Activated T-helper 1 cell treated with anti-CD3 and anti-CD28 coated beads, Interleukin-12 subunit alpha, Interleukin-12 subunit beta, Interleukin-2, Interleukin-4 antibody, amounts not matched to agents 30 ng/mL and 10 ng/mL and 1 ng/mL, durations not matched to agents 14 hours and 24 hours and 36 hours (primary cell): ENCODE measurements at regions of chr4 and their contacts with region 1.

Region 1: DNA sequence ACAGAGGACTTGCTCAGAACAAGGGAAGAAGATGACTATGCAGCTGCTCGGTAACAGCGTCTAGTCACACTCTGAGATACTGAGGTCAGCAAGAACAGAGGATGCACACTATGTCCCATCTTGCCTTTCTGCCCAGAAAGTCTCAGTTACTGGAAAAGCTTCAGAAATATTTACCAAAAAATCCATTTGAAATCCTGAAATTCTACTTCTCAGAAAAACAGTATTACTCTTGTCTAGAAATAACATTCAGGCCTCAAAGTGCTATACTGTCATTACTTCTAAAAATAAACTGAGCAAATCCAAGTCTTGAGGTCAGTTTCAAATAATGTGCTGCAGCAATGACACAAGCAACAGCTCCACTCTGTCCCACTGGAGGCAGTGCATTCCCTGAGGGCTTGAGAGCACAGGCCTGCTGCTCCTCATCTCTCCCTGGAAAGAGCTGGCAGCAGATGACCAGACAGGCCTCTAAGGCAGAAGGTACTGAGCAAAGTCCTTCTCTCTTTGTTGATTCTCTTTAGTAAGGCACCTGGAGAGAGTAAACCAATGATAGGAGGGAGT is 76.9 kb downstream of the CAMK2D start:
- DNase-seq: no peak
- H3K4me3 Mint-ChIP-seq: peak overlapping the region; percentile 58
- H3K27ac Mint-ChIP-seq: peak overlapping the region; percentile 90
- H3K4me1 Mint-ChIP-seq: peaks cover 70% of the 10 kb centered on the region
- H3K27me3 Mint-ChIP-seq: no peaks in the 10 kb centered on the region

Region 2: DNA sequence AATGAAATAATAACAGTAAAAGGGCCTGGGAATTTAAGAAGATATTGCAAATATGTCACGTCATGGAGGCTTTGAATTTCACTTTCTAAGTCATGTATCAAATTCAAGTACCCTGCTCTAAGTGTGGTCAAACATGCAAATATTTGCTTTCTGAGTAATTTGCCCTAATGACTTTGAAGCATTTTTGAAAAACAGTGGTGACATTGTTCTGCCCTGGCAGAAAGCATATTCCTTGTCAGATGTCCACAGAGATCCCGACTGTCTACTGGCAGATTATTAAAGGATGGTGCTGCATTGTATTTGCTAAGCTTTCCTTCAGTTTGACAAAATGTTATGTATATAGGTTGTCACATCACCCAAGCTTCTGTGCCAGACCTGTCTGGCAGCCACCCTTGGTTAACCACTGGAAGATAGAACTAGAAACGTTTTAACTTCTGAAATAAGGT is 542.7 kb before region 1 on chr4:
- intact Hi-C with region 1: loop called (anchors 10 kb)
- DNase-seq: no peak
- H3K4me3 Mint-ChIP-seq: no peak overlapping the region
- H3K27ac Mint-ChIP-seq: no peak overlapping the region
- H3K4me1 Mint-ChIP-seq: peaks cover 20% of the 10 kb centered on the region
- H3K27me3 Mint-ChIP-seq: peaks cover 9% of the 10 kb centered on the region

Region 3: DNA sequence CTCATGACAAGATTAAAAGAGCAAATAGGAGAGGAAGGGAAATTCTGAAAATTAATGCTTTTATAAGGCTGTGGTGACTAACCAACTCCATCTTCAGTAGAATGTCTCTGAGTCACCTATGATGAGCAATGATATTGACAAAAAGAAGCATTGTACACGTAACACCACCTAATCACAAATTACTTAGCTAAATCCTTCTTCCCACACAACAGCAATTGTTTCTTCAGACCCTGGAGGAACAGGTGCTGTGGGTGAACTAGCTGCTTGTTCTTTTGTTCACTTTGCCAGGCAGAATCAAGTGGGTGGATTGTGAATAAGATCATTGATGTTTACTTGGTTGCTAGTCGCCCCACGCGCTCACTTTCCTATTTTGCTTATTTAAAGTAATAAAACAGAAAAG is 238.6 kb before region 1 on chr4:
- intact Hi-C with region 1: loop called (anchors 2 kb)
- DNase-seq: no peak
- H3K4me3 Mint-ChIP-seq: no peak overlapping the region
- H3K27ac Mint-ChIP-seq: peak overlapping the region; percentile 54
- H3K4me1 Mint-ChIP-seq: peaks cover 24% of the 10 kb centered on the region
- H3K27me3 Mint-ChIP-seq: no peaks in the 10 kb centered on the region

Region 4: GRCh38 chr4:113547487-113548042 is 137.0 kb before region 1 on chr4:
- intact Hi-C with region 1: loop called (anchors 1 kb)
- DNase-seq: peak; percentile 87
- H3K4me3 Mint-ChIP-seq: no peak overlapping the region
- H3K27ac Mint-ChIP-seq: peak overlapping the region; percentile 49
- H3K4me1 Mint-ChIP-seq: peaks cover 30% of the 10 kb centered on the region
- H3K27me3 Mint-ChIP-seq: no peaks in the 10 kb centered on the region

Region 5: GRCh38 chr4:113574636-113575103 is 109.9 kb before region 1 on chr4:
- intact Hi-C with region 1: no loop called
- DNase-seq: no peak
- H3K4me3 Mint-ChIP-seq: no peak overlapping the region
- H3K27ac Mint-ChIP-seq: no peak overlapping the region
- H3K4me1 Mint-ChIP-seq: peaks cover 71% of the 10 kb centered on the region
- H3K27me3 Mint-ChIP-seq: no peaks in the 10 kb centered on the region

Region 6: DNA sequence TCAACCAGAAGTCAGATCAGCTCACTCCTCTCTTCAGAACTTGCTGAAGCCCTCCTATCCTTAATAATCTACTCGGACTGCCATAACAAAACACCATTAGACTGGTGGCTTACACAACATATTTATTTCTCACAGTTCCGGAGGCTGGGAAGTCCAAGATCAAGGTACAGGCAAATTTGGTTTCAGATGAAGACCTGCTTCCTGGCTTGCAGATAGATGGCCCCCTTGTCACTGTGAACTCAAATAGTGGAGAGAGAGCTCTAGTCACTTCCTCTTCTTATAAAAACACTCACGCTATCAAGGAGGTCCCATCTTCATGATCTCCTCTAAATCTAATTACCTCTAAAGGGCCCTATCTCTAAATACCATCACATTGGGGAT is 48.2 kb before region 1 on chr4:
- intact Hi-C with region 1: loop called (anchors 2 kb)
- DNase-seq: no peak
- H3K4me3 Mint-ChIP-seq: peak overlapping the region; percentile 64
- H3K27ac Mint-ChIP-seq: peak overlapping the region; percentile 87
- H3K4me1 Mint-ChIP-seq: peaks cover 54% of the 10 kb centered on the region
- H3K27me3 Mint-ChIP-seq: no peaks in the 10 kb centered on the region

Region 7: GRCh38 chr4:113711883-113712662 is 27.5 kb after region 1 on chr4:
- intact Hi-C with region 1: no loop called
- DNase-seq: no peak
- H3K4me3 Mint-ChIP-seq: no peak overlapping the region
- H3K27ac Mint-ChIP-seq: no peak overlapping the region
- H3K4me1 Mint-ChIP-seq: peaks cover 21% of the 10 kb centered on the region
- H3K27me3 Mint-ChIP-seq: no peaks in the 10 kb centered on the region

Region 8: GRCh38 chr4:113732967-113733527 is 48.4 kb after region 1 on chr4:
- intact Hi-C with region 1: loop called (anchors 1 kb)
- DNase-seq: no peak
- H3K4me3 Mint-ChIP-seq: no peak overlapping the region
- H3K27ac Mint-ChIP-seq: peak overlapping the region; percentile 19
- H3K4me1 Mint-ChIP-seq: peaks cover 68% of the 10 kb centered on the region
- H3K27me3 Mint-ChIP-seq: no peaks in the 10 kb centered on the region

Region 9: GRCh38 chr4:113823291-113823659 is 138.7 kb after region 1 on chr4:
- intact Hi-C with region 1: loop called (anchors 1 kb)
- DNase-seq: no peak
- H3K4me3 Mint-ChIP-seq: no peak overlapping the region
- H3K27ac Mint-ChIP-seq: no peak overlapping the region
- H3K4me1 Mint-ChIP-seq: peaks cover 38% of the 10 kb centered on the region
- H3K27me3 Mint-ChIP-seq: no peaks in the 10 kb centered on the region